Posterior cingulate gyrus (tissue), 11 donors: ENCODE measurements at regions of chr9 and their contacts with region 1.

Region 1: DNA sequence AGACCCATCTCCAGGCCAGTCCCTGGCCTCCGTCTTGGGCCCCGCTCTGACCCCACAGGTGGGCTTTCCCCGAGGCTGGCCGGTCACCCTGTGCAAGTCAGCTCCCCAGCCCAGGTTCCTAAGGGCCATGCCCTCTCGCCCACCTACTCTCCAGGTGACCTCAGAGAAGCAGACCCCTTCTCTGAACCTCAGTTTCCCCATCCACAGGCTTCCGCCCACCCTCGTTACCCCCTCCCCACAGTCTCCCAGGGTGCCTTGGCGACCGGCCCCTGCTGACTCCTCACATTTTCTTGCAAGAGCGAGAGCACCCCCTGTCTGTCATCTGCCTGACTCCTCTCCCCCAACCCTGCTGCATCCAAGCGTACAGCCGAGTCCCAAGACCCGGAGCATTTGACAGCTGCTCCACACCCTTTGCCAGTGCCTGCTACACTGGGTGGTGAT is 51.2 kb upstream of the ORM1 start:
- DNase-seq: peak in 8 of 10 donors; percentile 33 to 89 (median 58)

Region 2: GRCh38 chr9:114082017-114082762 is 189.5 kb before region 1 on chr9:
- intact Hi-C with region 1: loop called (anchors 1 kb)
- DNase-seq: peak; percentile 69 to 97 (median 93)

Region 3: GRCh38 chr9:114155263-114155972 is 116.2 kb before region 1 on chr9 and contains the start of gene COL27A1:
- intact Hi-C with region 1: loop called (anchors 1 kb)
- DNase-seq: peak; percentile 53 to 96 (median 80)